ENCODE measurements at regions of chr9 and their contacts with region 1.

Region 1: GRCh38 chr9:98101868-98102273 is 17.2 kb downstream of the TRIM14 start:
- DNase-seq: no peak
- ATAC-seq: no peak
- H3K4me3 ChIP-seq: no peak overlapping the region
- H3K27ac ChIP-seq: no peak overlapping the region
- H3K4me1 ChIP-seq: no peaks in the 10 kb centered on the region
- H3K27me3 ChIP-seq: no peaks in the 10 kb centered on the region
- CTCF ChIP-seq: no peak

Region 2: GRCh38 chr9:98118640-98119601 is 17.1 kb after region 1 on chr9 and contains the start of gene TRIM14:
- intact Hi-C with region 1: loop called in 1 of 2 experiments (anchors 1 kb)
- DNase-seq: peak; percentile 59 to 68
- ATAC-seq: peak; percentile 49 to 67 (median 61)
- H3K4me3 ChIP-seq: peak within 1 kb of the TSS; percentile 84
- H3K27ac ChIP-seq: no peak within 1 kb of the TSS
- H3K4me1 ChIP-seq: no peaks in the 10 kb centered on the region
- H3K27me3 ChIP-seq: peaks cover 0 to 11% (median 6%) of the 10 kb centered on the region in 3 donors
- CTCF ChIP-seq: no peak
- total RNA-seq, gene TRIM14: 0.79 to 2.5 (median 1.9) TPM